ENCODE measurements at regions of chr16 and their contacts with region 1.

Region 1: DNA sequence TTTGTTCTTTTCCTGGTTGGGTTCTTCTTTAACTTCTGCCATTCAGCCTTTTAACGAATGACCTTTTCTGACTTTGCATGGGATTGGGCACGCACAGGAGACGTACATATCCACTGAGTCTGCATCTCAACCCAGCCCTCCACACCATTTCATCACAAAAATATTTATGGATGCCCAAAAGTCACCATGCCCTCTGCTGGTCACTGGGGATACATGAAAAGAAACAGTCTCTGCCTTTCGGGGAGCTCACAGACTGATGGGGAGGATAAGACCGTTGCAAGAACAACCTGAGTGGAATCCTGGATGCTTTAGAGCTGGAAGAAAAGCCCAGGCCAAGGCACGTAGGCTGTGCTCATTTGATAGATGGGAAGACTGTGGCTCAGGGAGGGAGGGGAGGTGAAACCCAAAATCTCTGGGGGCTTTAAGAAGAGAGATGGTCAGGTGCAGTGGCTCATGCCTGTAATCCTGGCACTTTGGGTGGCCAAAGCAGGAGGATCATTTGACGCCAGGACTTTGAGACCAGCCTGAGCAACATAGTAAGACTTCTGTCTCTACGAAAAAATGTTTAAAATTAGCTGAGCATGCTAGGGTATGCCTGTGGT is 7.9 kb upstream of the MT2A start:
- DNase-seq: no peak
- ATAC-seq: peak; percentile 45

Region 2: GRCh38 chr16:56373003-56373402 is 227.5 kb before region 1 on chr16:
- intact Hi-C with region 1: no loop called
- DNase-seq: no peak
- ATAC-seq: no peak

Region 3: GRCh38 chr16:56519459-56520250 is 80.8 kb before region 1 on chr16 and contains the start of gene BBS2:
- intact Hi-C with region 1: loop called in 1 of 2 experiments (anchors 5 kb)
- DNase-seq: peak; percentile 89 to 95
- ATAC-seq: peak; percentile 96
- total RNA-seq, gene BBS2: 34.2 to 36.2 TPM